Activated B cell treated with CpG ODN at 0.5 μM for 24 hours (primary cell): ENCODE measurements at regions of chr19 and their contacts with region 1.

Region 1: DNA sequence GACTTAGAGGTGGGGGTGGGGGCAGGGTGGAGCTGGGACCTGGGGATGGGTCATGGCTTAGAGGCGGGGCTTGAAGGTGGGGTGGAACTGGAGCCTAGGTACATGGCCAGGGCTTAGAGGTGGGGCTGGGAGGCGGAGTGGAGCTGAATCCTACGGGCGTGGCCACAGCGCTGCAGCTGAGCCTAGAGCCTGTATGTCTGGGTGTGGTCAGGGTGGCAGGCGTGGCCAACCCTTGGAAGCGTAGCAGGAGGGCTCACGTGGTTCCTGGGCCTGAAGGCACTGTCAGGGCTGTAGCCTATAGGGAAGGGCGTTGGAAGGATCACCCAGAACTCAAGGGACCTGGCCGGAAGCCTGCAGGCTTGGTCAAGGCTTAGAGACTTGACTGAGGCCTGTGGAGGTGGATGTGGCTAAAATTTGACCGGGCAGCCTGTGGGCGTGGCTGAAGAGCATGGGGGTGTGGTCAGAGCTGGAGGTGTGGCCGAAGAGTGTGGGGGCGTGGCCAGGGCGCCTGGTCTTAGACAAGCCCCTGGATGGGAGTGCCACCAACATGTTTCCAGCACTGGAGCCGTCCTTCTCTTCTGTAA is 24.3 kb downstream of the COLGALT1 start:
- DNase-seq: peak; percentile 36
- ATAC-seq: peak; percentile 74
- H3K4me3 Mint-ChIP-seq: no peak overlapping the region
- H3K27ac Mint-ChIP-seq: no peak overlapping the region
- H3K4me1 Mint-ChIP-seq: peaks cover 9% of the 10 kb centered on the region
- H3K27me3 Mint-ChIP-seq: no peaks in the 10 kb centered on the region
- CTCF ChIP-seq: no peak

Region 2: GRCh38 chr19:17246681-17247425 is 332.9 kb before region 1 on chr19:
- CTCF ChIA-PET with region 1: no interaction called
- POLR2A ChIA-PET with region 1: no interaction called
- intact Hi-C with region 1: no loop called
- DNase-seq: no peak
- ATAC-seq: no peak
- H3K4me3 Mint-ChIP-seq: peak overlapping the region; percentile 92
- H3K27ac Mint-ChIP-seq: no peak overlapping the region
- H3K4me1 Mint-ChIP-seq: peaks cover 13% of the 10 kb centered on the region
- H3K27me3 Mint-ChIP-seq: no peaks in the 10 kb centered on the region
- CTCF ChIP-seq: no peak

Region 3: DNA sequence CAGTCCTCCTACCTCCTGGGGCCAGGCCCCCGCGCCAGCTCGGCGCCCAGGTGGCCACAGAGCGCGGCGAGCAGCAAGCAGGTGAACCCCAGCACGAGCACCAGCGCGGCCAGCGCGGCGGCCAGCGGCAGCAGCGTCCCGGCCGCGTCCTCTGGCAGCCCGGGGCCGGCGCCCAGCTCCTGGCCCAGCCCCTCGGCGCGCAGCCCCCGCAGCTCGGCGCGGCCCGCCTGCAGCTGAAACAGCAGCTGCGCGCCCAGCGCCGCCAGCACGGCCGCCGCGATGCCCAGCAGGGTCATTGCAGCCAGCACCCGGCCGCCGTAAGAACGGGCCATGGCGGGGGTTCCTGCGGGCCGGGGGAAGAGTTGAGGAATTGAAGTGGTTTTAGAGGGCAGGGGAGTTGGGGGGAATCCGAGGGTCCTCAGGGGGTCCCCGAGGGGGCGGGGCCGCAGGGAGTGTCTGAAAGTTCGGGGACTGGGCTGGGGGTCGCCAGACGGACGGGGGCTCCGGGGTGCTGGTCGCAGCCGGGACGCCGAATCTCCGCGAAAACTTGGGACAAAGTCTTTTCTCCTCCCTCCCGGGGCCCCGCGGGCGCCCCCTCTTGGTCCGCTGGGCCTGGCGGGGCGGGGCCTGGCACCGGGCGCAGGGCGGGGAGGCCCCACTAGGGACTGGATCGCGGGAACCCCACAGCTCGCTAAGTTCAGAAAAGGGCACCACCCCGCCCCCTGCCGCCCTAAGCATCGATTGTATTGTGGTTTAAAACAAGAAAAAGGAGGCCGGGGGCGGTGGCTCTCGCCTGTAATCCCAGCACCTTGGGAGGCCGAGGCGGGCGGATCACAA is 131.4 kb before region 1 on chr19 and contains the start of gene TMEM221:
- CTCF ChIA-PET with region 1: no interaction called
- POLR2A ChIA-PET with region 1: no interaction called
- intact Hi-C with region 1: loop called (anchors 1 kb)
- DNase-seq: peak; percentile 49
- ATAC-seq: peak; percentile 86
- H3K4me3 Mint-ChIP-seq: peak within 1 kb of the TSS; percentile 19
- H3K27ac Mint-ChIP-seq: no peak within 1 kb of the TSS
- H3K4me1 Mint-ChIP-seq: peaks cover 10% of the 10 kb centered on the region
- H3K27me3 Mint-ChIP-seq: peaks cover 24% of the 10 kb centered on the region
- CTCF ChIP-seq: no peak
- total RNA-seq, gene TMEM221: not detected in 2 replicates

Region 4: GRCh38 chr19:17555480-17555928 is 24.2 kb before region 1 on chr19 and contains the start of gene COLGALT1:
- CTCF ChIA-PET with region 1: interaction called, 4 read pairs
- POLR2A ChIA-PET with region 1: no interaction called
- intact Hi-C with region 1: loop called (anchors 1 kb)
- DNase-seq: peak; percentile 94
- ATAC-seq: peak; percentile 93
- H3K4me3 Mint-ChIP-seq: peak within 1 kb of the TSS; percentile 84
- H3K27ac Mint-ChIP-seq: peak within 1 kb of the TSS; percentile 75
- H3K4me1 Mint-ChIP-seq: peaks cover 23% of the 10 kb centered on the region
- H3K27me3 Mint-ChIP-seq: no peaks in the 10 kb centered on the region
- CTCF ChIP-seq: no peak
- total RNA-seq, gene COLGALT1: 69.2 and 80.3 TPM in 2 replicates